ENCODE measurements at regions of chr1 and their contacts with region 1.

Region 1: DNA sequence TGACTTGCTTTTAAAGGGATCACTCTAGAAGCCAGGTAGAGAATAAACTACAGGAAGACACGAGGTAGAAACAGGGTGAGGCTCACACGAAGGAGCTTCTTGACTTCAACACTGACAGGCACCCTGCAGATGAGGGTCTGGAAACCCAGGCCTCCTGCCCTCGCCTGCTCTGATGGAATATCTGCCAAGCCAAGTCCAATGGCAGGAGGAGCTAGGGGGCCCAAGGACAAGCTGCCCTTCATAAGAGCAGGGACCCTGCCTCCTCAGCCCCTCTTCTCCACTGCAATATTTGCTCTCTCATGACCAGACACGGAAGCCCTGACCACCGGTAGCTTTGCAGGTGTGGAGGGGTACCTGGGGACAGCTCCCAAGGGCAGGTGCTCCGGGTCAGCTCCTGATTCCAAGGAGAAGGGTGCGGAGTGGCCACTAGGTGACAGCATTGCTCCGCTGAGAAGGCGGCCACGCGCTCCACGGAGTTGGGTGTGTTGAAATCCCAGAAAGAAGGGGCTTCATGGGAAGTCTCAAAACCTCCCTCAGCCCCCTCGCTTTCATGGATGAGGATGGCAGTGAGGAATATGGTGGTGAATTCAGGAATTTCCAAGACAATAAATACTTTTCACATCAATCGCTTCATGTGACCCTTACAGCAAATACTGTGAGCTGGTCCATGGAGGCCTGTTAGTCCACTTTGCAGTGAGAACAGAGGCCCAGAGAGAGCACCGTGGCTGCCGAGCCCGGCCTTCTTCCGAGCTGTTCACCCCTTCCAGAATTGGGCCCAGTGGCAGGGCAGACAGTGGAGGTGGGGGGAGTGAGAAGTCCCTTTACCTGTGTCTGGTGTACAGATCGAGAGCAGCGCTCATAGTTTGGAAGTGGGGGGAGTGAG is 33.2 kb upstream of the PAX7 start:
- DNase-seq: peak in 1 of 2 donors; percentile 90
- H3K4me3 ChIP-seq: no peak overlapping the region
- CTCF ChIP-seq: peak in 1 of 3 donors; percentile 48
- POLR2A ChIP-seq: no peak

Region 2: DNA sequence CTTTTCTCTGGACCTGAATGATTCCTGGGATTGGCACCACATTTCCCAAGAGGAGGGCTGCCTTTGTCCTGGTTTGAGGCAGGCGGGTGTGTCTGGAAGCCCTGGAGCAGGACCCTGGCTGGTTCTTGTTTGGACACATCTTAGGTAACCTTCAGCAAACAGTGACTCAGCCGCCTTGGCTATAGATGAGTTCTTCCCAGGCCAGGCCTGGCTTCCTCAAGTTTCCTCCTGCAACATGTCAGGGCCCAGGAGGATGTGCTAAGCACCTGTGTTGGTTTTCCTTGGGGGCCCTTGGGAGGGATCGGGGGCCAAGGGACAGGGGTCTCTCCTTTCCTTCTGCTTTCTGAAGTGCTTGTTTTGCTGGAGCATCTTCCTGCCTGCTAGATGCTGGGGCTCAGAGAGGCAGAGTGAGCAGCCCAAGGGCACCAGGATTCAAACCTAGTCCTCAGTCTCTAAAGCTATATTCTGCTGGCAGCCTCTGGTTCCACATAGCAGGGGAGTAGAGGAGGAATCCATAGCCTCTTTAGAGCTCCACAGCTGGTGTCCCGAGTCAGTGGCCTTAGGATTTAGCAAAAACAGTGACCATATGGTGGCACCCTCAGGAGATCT is 71.5 kb after region 1 on chr1:
- intact Hi-C with region 1: no loop called
- DNase-seq: peak in 1 of 2 donors; percentile 55
- H3K4me3 ChIP-seq: no peak overlapping the region
- CTCF ChIP-seq: no peak
- POLR2A ChIP-seq: no peak

Region 3: DNA sequence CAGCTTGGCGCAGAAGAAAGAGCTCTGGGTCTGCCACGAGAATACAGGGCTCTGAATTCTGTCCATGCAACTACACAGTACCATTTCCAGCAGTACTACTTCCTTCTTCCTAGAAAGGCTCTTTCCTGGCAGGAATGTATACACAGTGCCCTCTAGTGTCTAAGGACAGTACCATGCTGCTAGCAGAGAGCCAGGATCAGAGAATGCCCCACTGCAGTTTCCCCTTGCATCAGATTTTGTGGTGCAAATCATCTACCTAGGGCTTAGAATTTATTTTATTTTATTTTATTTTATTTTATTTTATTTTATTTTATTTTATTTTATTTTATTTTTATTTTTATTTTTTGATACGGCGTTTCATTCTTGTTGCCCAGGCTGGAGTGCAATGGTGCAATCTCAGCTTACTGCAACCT is 84.0 kb after region 1 on chr1:
- intact Hi-C with region 1: loop called (anchors 5 kb)
- DNase-seq: no peak
- H3K4me3 ChIP-seq: no peak overlapping the region
- CTCF ChIP-seq: no peak
- POLR2A ChIP-seq: no peak

Region 4: DNA sequence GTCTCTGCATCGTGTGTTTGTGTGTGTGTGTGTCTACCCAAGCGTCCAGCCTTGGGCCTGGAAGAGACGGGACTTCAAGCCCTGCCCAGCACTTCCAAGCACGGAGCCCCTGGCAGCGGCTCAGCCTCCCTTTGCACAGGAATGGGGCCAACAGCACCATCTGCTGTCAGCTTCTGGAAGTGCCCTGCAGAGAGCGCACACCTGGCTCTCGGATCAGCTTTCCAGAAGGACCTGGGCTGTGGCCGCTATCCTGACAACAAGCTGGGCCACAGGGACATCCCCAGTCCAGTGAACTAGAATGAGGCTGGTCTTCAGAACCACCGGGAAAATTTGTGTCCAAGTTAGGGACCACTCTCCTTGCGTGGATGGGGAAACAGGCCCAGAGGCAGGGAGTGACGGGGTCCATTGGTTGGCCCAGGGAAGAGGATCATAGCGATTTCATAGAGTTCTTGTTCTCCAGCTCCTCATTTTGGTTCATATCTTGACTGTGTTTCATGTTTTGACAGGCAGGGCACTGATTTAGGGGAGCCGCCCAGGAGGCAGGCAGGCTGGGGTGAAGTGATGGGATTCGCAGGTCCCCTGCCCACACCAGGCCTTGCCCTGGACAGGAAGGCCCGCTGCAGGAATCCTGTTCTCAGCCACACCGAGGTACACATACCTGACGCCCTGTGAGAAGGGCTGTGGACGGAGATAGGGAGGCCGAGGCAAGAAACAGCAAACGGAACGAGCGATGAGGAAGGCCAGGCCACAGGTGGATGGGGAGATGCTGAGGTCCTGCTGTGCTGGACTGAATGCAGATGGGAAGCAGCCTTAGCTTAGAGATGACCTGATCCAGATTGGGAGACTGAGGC is 223.6 kb after region 1 on chr1:
- intact Hi-C with region 1: loop called (anchors 2 kb)
- DNase-seq: peak; percentile 46 to 91
- H3K4me3 ChIP-seq: no peak overlapping the region
- CTCF ChIP-seq: no peak
- POLR2A ChIP-seq: no peak